CD4-positive, alpha-beta T cell (primary cell): ENCODE measurements at regions of chr1 and their contacts with region 1.

Region 1: DNA sequence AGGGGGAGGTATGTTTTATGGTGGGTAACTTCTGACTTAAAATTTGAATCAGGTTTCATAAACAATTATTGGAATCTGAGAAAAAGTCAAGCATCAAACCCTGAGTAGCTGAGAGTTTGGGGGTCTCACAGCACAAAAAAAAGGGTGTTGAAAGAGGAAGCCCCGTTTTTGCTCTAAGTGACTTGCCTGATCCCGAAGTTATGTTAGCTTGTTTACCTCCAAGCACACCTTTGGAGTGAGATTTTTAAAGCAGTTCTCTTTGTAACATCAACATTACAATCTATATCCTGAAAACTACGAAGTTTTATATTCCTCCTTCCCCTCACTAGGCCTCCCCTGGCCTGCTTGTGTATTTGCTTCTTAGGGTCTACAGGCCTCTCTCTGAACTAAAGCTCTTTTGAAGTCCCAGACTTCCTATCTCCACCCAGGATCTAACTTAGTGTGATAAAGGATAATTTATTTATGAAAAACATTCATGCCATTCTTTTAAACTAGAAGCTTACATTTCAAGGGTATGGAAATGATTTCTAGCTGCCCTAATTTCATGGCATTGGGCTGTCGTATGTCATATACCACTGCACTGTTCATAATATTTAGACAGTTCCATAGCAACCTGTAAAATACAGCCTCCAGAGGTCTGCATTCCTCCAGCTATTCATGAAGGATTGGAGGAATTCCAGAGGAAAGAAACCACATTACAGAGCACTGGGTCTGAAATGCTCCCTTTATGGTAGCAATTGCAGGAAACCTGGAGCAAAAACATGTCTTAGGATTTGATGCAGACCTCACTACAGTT is 36.1 kb upstream of the RGS1 start:
- DNase-seq: peak in 2 of 14 experiments; percentile 36 to 42
- ATAC-seq: peak; percentile 34
- H3K4me3 ChIP-seq: no peak overlapping the region
- H3K4me3 Mint-ChIP-seq: no peak overlapping the region
- H3K27ac ChIP-seq: peak overlapping the region in 1 of 2 donors; percentile 37
- H3K27ac Mint-ChIP-seq: peak overlapping the region; percentile 84
- H3K4me1 ChIP-seq: peaks cover 11% of the 10 kb centered on the region
- H3K4me1 Mint-ChIP-seq: peaks cover 51% of the 10 kb centered on the region
- H3K27me3 ChIP-seq: no peaks in the 10 kb centered on the region
- H3K27me3 Mint-ChIP-seq: no peaks in the 10 kb centered on the region
- CTCF ChIP-seq: no peak

Region 2: GRCh38 chr1:192367436-192367835 is 172.1 kb before region 1 on chr1:
- CTCF ChIA-PET with region 1: no interaction called
- POLR2A ChIA-PET with region 1: no interaction called
- intact Hi-C with region 1: no loop called
- DNase-seq: no peak
- ATAC-seq: no peak
- H3K4me3 ChIP-seq: no peak overlapping the region
- H3K4me3 Mint-ChIP-seq: no peak overlapping the region
- H3K27ac ChIP-seq: no peak overlapping the region
- H3K27ac Mint-ChIP-seq: no peak overlapping the region
- H3K4me1 ChIP-seq: no peaks in the 10 kb centered on the region
- H3K4me1 Mint-ChIP-seq: no peaks in the 10 kb centered on the region
- H3K27me3 ChIP-seq: no peaks in the 10 kb centered on the region
- H3K27me3 Mint-ChIP-seq: no peaks in the 10 kb centered on the region
- CTCF ChIP-seq: no peak

Region 3: GRCh38 chr1:192550922-192551534 is 11.5 kb after region 1 on chr1:
- CTCF ChIA-PET with region 1: interaction called, 6 read pairs
- POLR2A ChIA-PET with region 1: interaction called, 15 read pairs
- intact Hi-C with region 1: no loop called
- DNase-seq: peak in 4 of 14 experiments; percentile 28 to 55 (median 42)
- ATAC-seq: peak; percentile 74
- H3K4me3 ChIP-seq: no peak overlapping the region
- H3K4me3 Mint-ChIP-seq: peak overlapping the region; percentile 67
- H3K27ac ChIP-seq: no peak overlapping the region
- H3K27ac Mint-ChIP-seq: peak overlapping the region; percentile 76
- H3K4me1 ChIP-seq: peaks cover 15% of the 10 kb centered on the region
- H3K4me1 Mint-ChIP-seq: peaks cover 52% of the 10 kb centered on the region
- H3K27me3 ChIP-seq: no peaks in the 10 kb centered on the region
- H3K27me3 Mint-ChIP-seq: no peaks in the 10 kb centered on the region
- CTCF ChIP-seq: no peak

Region 4: DNA sequence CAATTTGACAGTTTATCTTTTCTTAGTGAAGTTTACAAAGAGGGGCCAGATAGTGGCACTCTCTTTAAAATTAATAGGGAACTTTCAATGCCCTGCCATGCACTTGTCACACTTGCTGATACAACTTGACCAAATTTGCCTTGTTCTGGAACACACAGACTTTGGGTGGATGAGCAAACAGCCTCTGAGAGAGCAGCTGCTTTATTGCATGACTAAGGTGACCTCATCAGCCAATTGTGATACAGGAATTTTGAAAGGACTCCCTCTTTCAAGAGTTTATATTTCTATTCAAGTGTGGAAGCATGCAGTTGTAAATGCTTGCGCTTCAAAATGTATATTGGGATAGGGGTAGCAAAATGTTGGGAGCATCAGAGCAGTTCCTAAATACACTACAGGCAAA is 34.0 kb after region 1 on chr1:
- CTCF ChIA-PET with region 1: interaction called, 4 read pairs
- POLR2A ChIA-PET with region 1: interaction called, 6 read pairs
- intact Hi-C with region 1: loop called (anchors 1 to 5 kb)
- DNase-seq: peak in 3 of 14 experiments; percentile 21 to 44 (median 36)
- ATAC-seq: no peak
- H3K4me3 ChIP-seq: no peak overlapping the region
- H3K4me3 Mint-ChIP-seq: peak overlapping the region; percentile 55
- H3K27ac ChIP-seq: no peak overlapping the region
- H3K27ac Mint-ChIP-seq: peak overlapping the region; percentile 85
- H3K4me1 ChIP-seq: peaks cover 2% of the 10 kb centered on the region
- H3K4me1 Mint-ChIP-seq: peaks cover 74% of the 10 kb centered on the region
- H3K27me3 ChIP-seq: no peaks in the 10 kb centered on the region
- H3K27me3 Mint-ChIP-seq: no peaks in the 10 kb centered on the region
- CTCF ChIP-seq: no peak

Region 5: DNA sequence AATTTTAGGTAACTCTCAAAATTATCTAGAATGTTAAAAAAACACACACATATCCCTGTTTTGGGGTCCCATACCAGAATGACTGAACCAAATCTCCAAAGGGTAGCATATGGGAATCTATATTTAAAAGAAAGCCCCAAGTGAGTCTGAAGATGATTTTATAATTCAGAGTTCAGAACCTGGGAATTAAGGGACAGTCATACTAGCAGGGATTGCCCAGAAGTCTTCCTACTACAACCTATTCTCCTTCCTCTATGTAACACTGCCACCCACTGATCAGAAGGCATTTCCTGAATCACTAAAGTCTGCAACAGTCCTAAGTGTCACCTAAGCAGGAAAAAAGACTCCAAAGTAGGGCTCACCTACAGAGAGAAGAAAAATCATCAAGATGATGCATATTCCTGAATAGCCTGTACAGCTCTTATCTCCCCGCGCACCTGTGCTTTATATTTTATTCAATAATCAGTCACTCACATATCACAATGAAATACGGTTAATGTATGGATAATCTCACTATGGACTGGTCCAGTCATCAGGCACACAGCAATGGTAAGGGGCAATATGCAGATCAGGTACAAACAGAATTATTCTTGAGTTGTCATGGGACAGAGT is 41.0 kb after region 1 on chr1:
- CTCF ChIA-PET with region 1: no interaction called
- POLR2A ChIA-PET with region 1: interaction called, 4 read pairs
- intact Hi-C with region 1: loop called in 1 of 2 experiments (anchors 1 kb)
- DNase-seq: peak in 4 of 14 experiments; percentile 36 to 72 (median 60)
- ATAC-seq: peak; percentile 30
- H3K4me3 ChIP-seq: no peak overlapping the region
- H3K4me3 Mint-ChIP-seq: no peak overlapping the region
- H3K27ac ChIP-seq: no peak overlapping the region
- H3K27ac Mint-ChIP-seq: peak overlapping the region; percentile 48
- H3K4me1 ChIP-seq: peaks cover 4% of the 10 kb centered on the region
- H3K4me1 Mint-ChIP-seq: peaks cover 46% of the 10 kb centered on the region
- H3K27me3 ChIP-seq: no peaks in the 10 kb centered on the region
- H3K27me3 Mint-ChIP-seq: no peaks in the 10 kb centered on the region
- CTCF ChIP-seq: peak; percentile 65

Region 6: DNA sequence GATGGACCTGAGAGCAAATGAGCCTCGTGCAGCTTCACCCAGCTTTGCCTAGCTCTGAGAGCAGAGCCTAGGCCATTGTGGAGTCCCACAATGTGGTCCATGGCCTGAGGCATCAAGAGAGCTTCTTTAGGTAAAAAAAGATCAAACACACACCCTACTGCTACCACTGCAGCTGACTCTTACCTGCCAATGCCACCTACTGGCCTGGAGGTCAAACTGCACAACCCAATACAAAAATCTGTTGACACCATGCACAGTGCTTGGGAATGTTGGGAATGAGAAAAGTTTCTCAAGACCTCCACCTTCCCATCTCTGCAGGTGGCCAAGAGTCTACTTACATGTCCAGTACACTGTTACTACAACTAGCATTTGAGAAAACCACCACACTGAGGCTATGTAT is 459.0 kb after region 1 on chr1:
- CTCF ChIA-PET with region 1: no interaction called
- POLR2A ChIA-PET with region 1: no interaction called
- intact Hi-C with region 1: no loop called
- DNase-seq: peak in 1 of 14 experiments; percentile 5
- ATAC-seq: no peak
- H3K4me3 ChIP-seq: no peak overlapping the region
- H3K4me3 Mint-ChIP-seq: no peak overlapping the region
- H3K27ac ChIP-seq: no peak overlapping the region
- H3K27ac Mint-ChIP-seq: no peak overlapping the region
- H3K4me1 ChIP-seq: no peaks in the 10 kb centered on the region
- H3K4me1 Mint-ChIP-seq: no peaks in the 10 kb centered on the region
- H3K27me3 ChIP-seq: no peaks in the 10 kb centered on the region
- H3K27me3 Mint-ChIP-seq: no peaks in the 10 kb centered on the region
- CTCF ChIP-seq: no peak